ENCODE measurements at regions of chr15 and their contacts with region 1.

Region 1: DNA sequence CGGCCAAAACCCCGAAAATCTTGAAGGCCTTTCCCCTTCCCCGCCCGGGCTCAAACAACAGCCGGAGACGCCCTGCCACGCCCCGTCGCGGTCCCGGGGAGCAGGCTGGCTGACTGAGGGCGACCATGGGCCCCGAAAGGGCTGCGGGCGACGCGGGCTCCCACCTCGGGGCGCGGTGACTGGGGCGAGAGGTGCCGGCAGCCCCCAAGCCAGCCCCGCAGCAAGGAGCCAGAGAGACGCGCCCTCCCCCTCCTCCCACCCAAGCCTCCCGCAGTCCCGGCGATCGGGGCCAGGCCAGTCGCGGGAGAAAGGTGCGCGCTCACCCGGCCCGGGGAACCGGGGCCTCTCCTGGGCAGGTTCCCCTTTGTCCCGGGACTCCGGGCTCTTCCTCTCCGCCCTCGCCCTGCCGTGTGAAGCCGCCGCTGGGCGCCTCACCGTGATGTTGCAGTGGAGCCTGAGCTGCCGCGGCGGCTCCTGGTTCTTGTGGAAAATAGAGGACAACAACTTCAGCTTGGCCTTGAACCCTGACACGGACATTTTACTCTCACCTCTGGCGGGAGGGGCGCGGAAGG is 30.6 kb upstream of the ZSCAN2 start:
- DNase-seq: no peak
- ATAC-seq: peak; percentile 64
- H3K4me3 ChIP-seq: peak overlapping the region; percentile 71 to 90 (median 87)
- H3K27ac ChIP-seq: peak overlapping the region; percentile 91
- H3K4me1 ChIP-seq: peaks cover 23% of the 10 kb centered on the region
- H3K27me3 ChIP-seq: no peaks in the 10 kb centered on the region; a peak in 1 of 5 replicates
- CTCF ChIP-seq: no peak
- EP300 ChIP-seq: no peak
- POLR2A ChIP-seq: peak in 1 of 2 experiments; percentile 32; a peak in 2 of 4 replicates
- RAD21 ChIP-seq: no peak

Region 2: DNA sequence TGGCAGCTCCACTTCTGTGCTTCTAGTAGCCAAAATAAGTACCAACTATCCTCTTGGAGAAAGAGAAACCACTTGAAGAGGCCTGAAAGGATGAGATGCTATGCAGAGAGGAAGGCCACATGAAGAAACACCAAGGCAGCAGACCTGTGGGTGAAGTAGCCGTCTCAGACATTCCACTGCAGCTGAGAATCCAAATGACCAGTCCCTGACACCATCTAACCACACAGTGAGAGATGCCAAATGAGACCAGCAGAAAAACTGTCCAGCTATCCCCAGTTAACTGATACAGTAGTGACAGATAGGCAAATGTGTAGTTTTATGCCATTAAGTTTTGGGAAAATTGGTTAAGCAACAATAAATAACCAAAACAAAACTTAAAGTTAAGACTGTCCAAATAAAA is 17.4 kb before region 1 on chr15:
- CTCF ChIA-PET with region 1: no interaction called
- POLR2A ChIA-PET with region 1: no interaction called
- in situ Hi-C with region 1: no loop called
- intact Hi-C with region 1: no loop called
- DNase-seq: no peak
- ATAC-seq: no peak
- H3K4me3 ChIP-seq: no peak overlapping the region
- H3K27ac ChIP-seq: no peak overlapping the region
- H3K4me1 ChIP-seq: peaks cover 20% of the 10 kb centered on the region
- H3K27me3 ChIP-seq: no peaks in the 10 kb centered on the region
- CTCF ChIP-seq: no peak
- EP300 ChIP-seq: no peak
- POLR2A ChIP-seq: no peak
- RAD21 ChIP-seq: no peak

Region 3: GRCh38 chr15:84582583-84583157 is 12.4 kb after region 1 on chr15:
- CTCF ChIA-PET with region 1: interaction called, 3 read pairs
- POLR2A ChIA-PET with region 1: interaction called, 10 read pairs
- in situ Hi-C with region 1: no loop called
- intact Hi-C with region 1: no loop called
- DNase-seq: no peak
- ATAC-seq: no peak
- H3K4me3 ChIP-seq: no peak overlapping the region
- H3K27ac ChIP-seq: no peak overlapping the region
- H3K4me1 ChIP-seq: peaks cover 70% of the 10 kb centered on the region
- H3K27me3 ChIP-seq: no peaks in the 10 kb centered on the region; a peak in 2 of 5 replicates
- CTCF ChIP-seq: no peak
- EP300 ChIP-seq: no peak
- POLR2A ChIP-seq: no peak
- RAD21 ChIP-seq: no peak

Region 4: GRCh38 chr15:84725001-84725491 is 154.8 kb after region 1 on chr15:
- CTCF ChIA-PET with region 1: no interaction called
- POLR2A ChIA-PET with region 1: no interaction called
- in situ Hi-C with region 1: no loop called
- intact Hi-C with region 1: no loop called
- DNase-seq: no peak
- ATAC-seq: peak; percentile 43
- H3K4me3 ChIP-seq: no peak overlapping the region
- H3K27ac ChIP-seq: no peak overlapping the region
- H3K4me1 ChIP-seq: peaks cover 20% of the 10 kb centered on the region
- H3K27me3 ChIP-seq: no peaks in the 10 kb centered on the region
- CTCF ChIP-seq: no peak
- EP300 ChIP-seq: no peak
- POLR2A ChIP-seq: no peak
- RAD21 ChIP-seq: no peak

Region 5: DNA sequence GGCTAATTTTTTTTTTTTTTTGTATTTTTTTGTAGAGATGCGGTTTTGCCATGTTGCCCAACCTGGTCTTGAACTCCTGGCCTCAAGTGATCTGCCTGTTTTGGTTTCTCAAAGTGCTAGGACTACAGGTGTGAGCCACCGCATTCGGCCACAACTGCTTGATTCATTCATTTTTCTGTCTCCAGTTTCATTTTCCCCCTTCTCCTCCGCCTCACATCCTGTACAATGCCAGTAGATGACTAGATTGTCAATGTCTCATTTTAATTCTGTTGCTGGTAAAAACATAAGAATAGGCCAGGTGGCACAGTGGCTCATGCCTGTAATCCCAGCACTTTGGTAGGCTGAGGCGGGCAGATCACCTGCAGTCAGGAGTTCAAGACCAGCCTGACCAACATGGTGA is 166.1 kb after region 1 on chr15:
- CTCF ChIA-PET with region 1: no interaction called
- POLR2A ChIA-PET with region 1: no interaction called
- in situ Hi-C with region 1: no loop called
- intact Hi-C with region 1: no loop called
- DNase-seq: no peak
- ATAC-seq: no peak
- H3K4me3 ChIP-seq: no peak overlapping the region
- H3K27ac ChIP-seq: no peak overlapping the region
- H3K4me1 ChIP-seq: peaks cover 35% of the 10 kb centered on the region
- H3K27me3 ChIP-seq: no peaks in the 10 kb centered on the region
- CTCF ChIP-seq: no peak
- EP300 ChIP-seq: no peak
- POLR2A ChIP-seq: no peak
- RAD21 ChIP-seq: no peak

Region 6: DNA sequence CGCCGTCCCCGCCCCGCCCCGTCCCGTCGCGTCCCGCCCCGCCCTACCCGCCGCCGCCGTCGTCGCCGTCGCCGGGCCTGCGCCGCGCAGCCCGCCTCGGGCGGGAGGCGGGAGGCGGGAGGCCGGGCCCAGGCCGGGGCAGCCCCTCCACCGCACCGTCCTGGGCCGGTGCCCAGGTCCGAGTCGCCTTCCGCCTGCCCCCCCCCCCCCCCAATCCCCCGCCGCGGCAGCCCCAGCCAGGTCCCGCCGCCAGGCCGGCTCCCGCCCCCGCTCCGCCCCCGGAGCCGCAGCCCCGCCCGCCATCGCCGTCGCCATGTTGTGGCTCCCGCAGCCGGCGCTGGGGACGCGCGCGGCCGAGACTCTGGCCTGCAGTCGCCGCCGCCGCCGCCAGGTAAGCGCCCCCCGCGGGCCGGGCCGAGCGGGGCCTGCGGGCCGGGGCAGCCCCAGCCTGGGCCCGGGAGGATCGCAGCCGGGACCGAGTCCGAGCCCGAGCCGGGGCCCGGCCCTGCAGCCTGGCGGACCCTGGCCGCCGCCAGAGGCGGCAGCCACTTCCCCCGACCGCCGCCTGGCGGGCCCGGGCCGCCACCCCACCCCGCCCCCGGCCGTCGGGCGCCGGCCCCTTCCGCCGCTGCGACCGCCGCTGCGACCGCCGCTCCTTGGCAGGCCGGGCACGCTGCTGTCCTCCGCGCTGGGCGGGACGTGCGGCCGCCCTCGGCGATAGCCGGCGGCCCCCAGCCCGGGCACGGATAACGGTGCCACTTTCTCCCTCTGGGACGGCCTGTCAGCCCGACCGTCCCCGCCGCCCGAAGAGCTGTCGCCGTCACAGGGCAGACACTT is 178.2 kb after region 1 on chr15 and contains the start of gene ZNF592:
- CTCF ChIA-PET with region 1: no interaction called
- POLR2A ChIA-PET with region 1: no interaction called
- in situ Hi-C with region 1: no loop called
- intact Hi-C with region 1: no loop called
- DNase-seq: peak; percentile 36
- ATAC-seq: peak; percentile 64
- H3K4me3 ChIP-seq: peak within 1 kb of the TSS; percentile 75 to 95 (median 84)
- H3K27ac ChIP-seq: peak within 1 kb of the TSS; percentile 98
- H3K4me1 ChIP-seq: peaks cover 53% of the 10 kb centered on the region
- H3K27me3 ChIP-seq: no peaks in the 10 kb centered on the region; a peak in 2 of 5 replicates
- CTCF ChIP-seq: no peak
- EP300 ChIP-seq: no peak
- POLR2A ChIP-seq: peak; percentile 23 to 41
- RAD21 ChIP-seq: peak; percentile 48; the same call in 1 of the 2 replicates
- total RNA-seq, gene ZNF592: 8.2 and 8.6 TPM in 2 replicates

Measured in HepG2 (cell line).